ENCODE measurements at regions of chr12 and their contacts with region 1.

Region 1: DNA sequence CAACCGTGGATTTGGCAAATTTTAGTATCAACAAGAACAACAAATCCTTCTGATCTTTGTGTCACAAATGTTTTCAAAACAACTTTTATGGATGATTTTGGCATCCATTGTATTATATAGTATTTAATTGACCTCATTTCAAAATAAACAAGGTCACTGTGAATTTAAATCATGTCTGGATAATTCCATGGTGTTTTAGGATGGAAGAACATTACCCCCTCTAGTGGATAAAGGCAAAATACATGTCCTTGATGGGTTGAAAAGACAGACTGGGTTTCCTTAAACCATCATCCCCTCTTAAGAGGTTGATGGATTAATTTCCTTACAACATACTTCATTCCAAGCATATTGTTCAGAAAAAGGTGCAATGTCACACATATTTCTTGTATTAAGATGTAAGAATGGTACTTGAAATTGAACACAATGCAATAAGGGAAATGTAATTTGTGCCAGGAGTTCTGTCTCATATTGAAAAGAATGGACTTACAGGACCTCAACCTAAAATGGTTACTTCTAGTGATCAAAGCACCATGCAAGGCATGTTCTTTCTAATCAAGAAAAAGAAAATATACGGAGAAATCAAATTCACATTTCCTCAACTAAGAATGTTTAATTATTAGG is 352.0 kb downstream of the BCAT1 start:
- DNase-seq: peak; percentile 26
- ATAC-seq: no peak
- H3K4me3 ChIP-seq: no peak overlapping the region
- H3K4me3 Mint-ChIP-seq: no peak overlapping the region
- H3K27ac ChIP-seq: no peak overlapping the region
- H3K27ac Mint-ChIP-seq: no peak overlapping the region
- H3K4me1 ChIP-seq: peaks cover 23 to 24% of the 10 kb centered on the region in 2 donors
- H3K4me1 Mint-ChIP-seq: peaks cover 30% of the 10 kb centered on the region
- H3K27me3 ChIP-seq: no peaks in the 10 kb centered on the region
- H3K27me3 Mint-ChIP-seq: no peaks in the 10 kb centered on the region
- CTCF ChIP-seq: peak; percentile 74

Region 2: GRCh38 chr12:24378548-24379407 is 218.1 kb before region 1 on chr12:
- CTCF ChIA-PET with region 1: no interaction called
- POLR2A ChIA-PET with region 1: no interaction called
- intact Hi-C with region 1: loop called (anchors 5 kb)
- DNase-seq: peak; percentile 54
- ATAC-seq: peak; percentile 77
- H3K4me3 ChIP-seq: peak overlapping the region in 4 of 5 experiments; percentile 3 to 65 (median 34)
- H3K4me3 Mint-ChIP-seq: peak overlapping the region; percentile 82
- H3K27ac ChIP-seq: peak overlapping the region; percentile 56 to 58
- H3K27ac Mint-ChIP-seq: peak overlapping the region; percentile 93
- H3K4me1 ChIP-seq: peaks cover 23 to 24% of the 10 kb centered on the region in 2 donors
- H3K4me1 Mint-ChIP-seq: peaks cover 32% of the 10 kb centered on the region
- H3K27me3 ChIP-seq: no peaks in the 10 kb centered on the region
- H3K27me3 Mint-ChIP-seq: no peaks in the 10 kb centered on the region
- CTCF ChIP-seq: no peak

Region 3: DNA sequence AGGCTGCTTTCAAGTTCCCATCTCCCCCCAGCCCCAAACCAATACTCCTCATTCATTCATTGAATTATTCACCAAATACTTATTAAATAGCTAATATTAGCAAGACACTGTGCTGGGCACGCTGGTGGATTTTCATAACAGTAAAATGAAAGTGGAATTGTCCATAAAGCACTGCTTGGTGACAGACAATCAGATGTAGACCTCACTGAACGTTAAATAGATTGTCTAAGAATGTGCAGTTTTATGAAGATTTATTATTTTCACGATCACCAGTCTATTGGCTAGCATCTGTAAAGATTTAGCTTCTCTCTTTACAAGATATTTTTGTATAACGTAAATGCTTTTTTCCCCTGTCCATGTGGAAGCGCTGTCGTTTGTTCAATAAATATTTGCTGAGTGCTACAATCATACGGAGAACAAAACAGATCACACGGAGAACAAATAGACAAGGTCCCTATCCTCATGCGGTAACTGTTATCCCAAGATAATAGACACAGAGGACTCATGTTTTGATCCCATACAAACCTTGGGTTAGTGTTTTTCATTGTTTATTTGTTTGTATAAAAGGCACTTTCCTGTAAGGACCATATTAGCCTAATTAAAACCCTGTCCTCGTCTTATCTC is 45.6 kb before region 1 on chr12:
- CTCF ChIA-PET with region 1: no interaction called
- POLR2A ChIA-PET with region 1: no interaction called
- intact Hi-C with region 1: no loop called
- DNase-seq: no peak
- ATAC-seq: no peak
- H3K4me3 ChIP-seq: no peak overlapping the region
- H3K4me3 Mint-ChIP-seq: no peak overlapping the region
- H3K27ac ChIP-seq: no peak overlapping the region
- H3K27ac Mint-ChIP-seq: no peak overlapping the region
- H3K4me1 ChIP-seq: no peaks in the 10 kb centered on the region
- H3K4me1 Mint-ChIP-seq: peaks cover 2% of the 10 kb centered on the region
- H3K27me3 ChIP-seq: no peaks in the 10 kb centered on the region
- H3K27me3 Mint-ChIP-seq: no peaks in the 10 kb centered on the region
- CTCF ChIP-seq: no peak

Region 4: GRCh38 chr12:24561882-24562760 is 34.8 kb before region 1 on chr12:
- CTCF ChIA-PET with region 1: no interaction called
- POLR2A ChIA-PET with region 1: no interaction called
- intact Hi-C with region 1: loop called (anchors 5 kb)
- DNase-seq: peak; percentile 68
- ATAC-seq: peak; percentile 51
- H3K4me3 ChIP-seq: peak overlapping the region; percentile 71 to 80 (median 78)
- H3K4me3 Mint-ChIP-seq: peak overlapping the region; percentile 91
- H3K27ac ChIP-seq: peak overlapping the region in 1 of 2 donors; percentile 59
- H3K27ac Mint-ChIP-seq: peak overlapping the region; percentile 69
- H3K4me1 ChIP-seq: peaks cover 15 to 18% of the 10 kb centered on the region in 2 donors
- H3K4me1 Mint-ChIP-seq: peaks cover 22% of the 10 kb centered on the region
- H3K27me3 ChIP-seq: peaks cover 0 to 23% (median 18%) of the 10 kb centered on the region in 4 experiments
- H3K27me3 Mint-ChIP-seq: peaks cover 23% of the 10 kb centered on the region
- CTCF ChIP-seq: no peak

Region 5: DNA sequence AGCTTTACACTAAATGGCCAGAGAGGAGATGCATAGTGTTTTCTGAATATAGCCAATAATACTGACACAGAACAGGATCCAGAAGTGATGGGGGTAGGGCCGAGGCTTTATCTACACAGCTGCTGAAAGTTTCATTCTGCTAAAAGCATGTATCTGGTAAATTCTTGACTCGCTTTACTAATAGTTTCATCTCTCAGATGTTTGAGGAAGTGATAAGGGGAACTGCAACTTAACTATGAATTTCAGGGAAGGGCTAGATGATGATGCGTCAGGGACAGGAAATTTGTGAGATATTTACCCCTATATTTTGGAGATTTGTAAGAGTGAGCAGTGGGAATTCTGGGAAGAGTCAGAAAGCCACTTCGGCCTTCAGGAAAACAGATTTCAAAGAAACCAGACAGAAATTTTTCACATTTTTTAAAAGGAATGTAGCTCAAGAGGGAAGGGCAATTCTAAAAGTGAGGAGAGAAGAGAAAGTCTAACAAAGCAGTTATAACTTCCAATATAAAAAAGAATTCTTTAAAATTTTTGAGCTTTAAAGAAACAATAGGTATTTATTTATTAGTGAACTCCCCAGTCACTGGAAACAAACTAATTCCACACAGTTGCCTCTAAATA is 109.0 kb after region 1 on chr12:
- CTCF ChIA-PET with region 1: no interaction called
- POLR2A ChIA-PET with region 1: no interaction called
- intact Hi-C with region 1: loop called (anchors 10 kb)
- DNase-seq: peak; percentile 72
- ATAC-seq: peak; percentile 96
- H3K4me3 ChIP-seq: no peak overlapping the region
- H3K4me3 Mint-ChIP-seq: peak overlapping the region; percentile 20
- H3K27ac ChIP-seq: peak overlapping the region; percentile 11 to 53
- H3K27ac Mint-ChIP-seq: peak overlapping the region; percentile 3
- H3K4me1 ChIP-seq: peaks cover 12 to 15% of the 10 kb centered on the region in 2 donors
- H3K4me1 Mint-ChIP-seq: peaks cover 15% of the 10 kb centered on the region
- H3K27me3 ChIP-seq: no peaks in the 10 kb centered on the region
- H3K27me3 Mint-ChIP-seq: no peaks in the 10 kb centered on the region
- CTCF ChIP-seq: no peak

Region 6: DNA sequence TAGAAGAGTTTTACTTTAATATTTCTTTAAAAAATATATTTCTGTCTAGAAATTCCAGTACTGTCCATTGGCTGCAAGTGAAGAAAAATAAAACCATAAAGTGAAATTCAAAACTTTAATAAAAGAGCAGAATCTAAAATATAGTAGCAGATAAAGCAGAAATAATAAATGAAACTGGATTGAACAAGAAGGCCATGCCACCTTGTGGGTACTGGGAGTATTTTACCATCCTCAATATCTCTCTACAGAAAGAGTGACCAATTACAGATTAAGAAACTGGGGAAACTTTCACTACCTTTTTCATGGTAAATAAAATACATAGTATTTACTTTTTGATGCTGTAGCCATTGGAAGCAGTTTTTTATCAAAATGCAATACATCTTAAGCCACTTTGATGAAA is 131.5 kb after region 1 on chr12:
- CTCF ChIA-PET with region 1: no interaction called
- POLR2A ChIA-PET with region 1: no interaction called
- intact Hi-C with region 1: loop called (anchors 5 kb)
- DNase-seq: peak; percentile 50
- ATAC-seq: no peak
- H3K4me3 ChIP-seq: no peak overlapping the region
- H3K4me3 Mint-ChIP-seq: peak overlapping the region; percentile 17
- H3K27ac ChIP-seq: no peak overlapping the region
- H3K27ac Mint-ChIP-seq: no peak overlapping the region
- H3K4me1 ChIP-seq: peaks cover 22 to 23% of the 10 kb centered on the region in 2 donors
- H3K4me1 Mint-ChIP-seq: peaks cover 57% of the 10 kb centered on the region
- H3K27me3 ChIP-seq: no peaks in the 10 kb centered on the region
- H3K27me3 Mint-ChIP-seq: no peaks in the 10 kb centered on the region
- CTCF ChIP-seq: peak; percentile 76

Region 7: DNA sequence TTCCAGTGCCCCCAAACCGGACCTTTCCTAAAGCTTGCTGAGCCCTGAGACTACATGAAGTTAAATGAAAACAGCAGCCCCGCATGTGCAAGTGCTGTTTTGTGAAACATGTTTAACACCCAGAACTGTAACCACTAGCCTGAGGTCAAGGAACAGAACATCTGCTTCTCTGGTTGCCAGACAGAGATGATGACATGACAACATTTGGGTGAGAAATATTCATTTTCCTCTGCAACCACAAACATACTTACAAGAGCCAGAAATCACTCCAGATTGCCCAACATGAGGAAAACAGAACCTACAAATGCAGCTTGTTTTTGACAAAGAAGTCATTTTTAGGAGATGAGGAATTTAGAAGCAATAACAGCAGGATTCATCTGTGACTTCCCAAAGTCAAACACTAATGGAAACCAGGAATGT is 241.7 kb after region 1 on chr12:
- CTCF ChIA-PET with region 1: no interaction called
- POLR2A ChIA-PET with region 1: no interaction called
- intact Hi-C with region 1: loop called (anchors 5 kb)
- DNase-seq: peak; percentile 4
- ATAC-seq: no peak
- H3K4me3 ChIP-seq: no peak overlapping the region
- H3K4me3 Mint-ChIP-seq: no peak overlapping the region
- H3K27ac ChIP-seq: no peak overlapping the region
- H3K27ac Mint-ChIP-seq: no peak overlapping the region
- H3K4me1 ChIP-seq: peaks cover 0 to 13% of the 10 kb centered on the region in 2 donors
- H3K4me1 Mint-ChIP-seq: peaks cover 13% of the 10 kb centered on the region
- H3K27me3 ChIP-seq: no peaks in the 10 kb centered on the region
- H3K27me3 Mint-ChIP-seq: no peaks in the 10 kb centered on the region
- CTCF ChIP-seq: no peak

Region 8: GRCh38 chr12:25162866-25163265 is 566.0 kb after region 1 on chr12:
- CTCF ChIA-PET with region 1: no interaction called
- POLR2A ChIA-PET with region 1: no interaction called
- intact Hi-C with region 1: no loop called
- DNase-seq: no peak
- ATAC-seq: no peak
- H3K4me3 ChIP-seq: no peak overlapping the region
- H3K4me3 Mint-ChIP-seq: no peak overlapping the region
- H3K27ac ChIP-seq: no peak overlapping the region
- H3K27ac Mint-ChIP-seq: no peak overlapping the region
- H3K4me1 ChIP-seq: peaks cover 12 to 16% of the 10 kb centered on the region in 2 donors
- H3K4me1 Mint-ChIP-seq: peaks cover 18% of the 10 kb centered on the region
- H3K27me3 ChIP-seq: no peaks in the 10 kb centered on the region
- H3K27me3 Mint-ChIP-seq: no peaks in the 10 kb centered on the region
- CTCF ChIP-seq: no peak